Activated CD4-positive, alpha-beta memory T cell treated with anti-CD3 and anti-CD28 coated beads for 36 hours (primary cell): ENCODE measurements at regions of chr18 and their contacts with region 1.

Region 1: DNA sequence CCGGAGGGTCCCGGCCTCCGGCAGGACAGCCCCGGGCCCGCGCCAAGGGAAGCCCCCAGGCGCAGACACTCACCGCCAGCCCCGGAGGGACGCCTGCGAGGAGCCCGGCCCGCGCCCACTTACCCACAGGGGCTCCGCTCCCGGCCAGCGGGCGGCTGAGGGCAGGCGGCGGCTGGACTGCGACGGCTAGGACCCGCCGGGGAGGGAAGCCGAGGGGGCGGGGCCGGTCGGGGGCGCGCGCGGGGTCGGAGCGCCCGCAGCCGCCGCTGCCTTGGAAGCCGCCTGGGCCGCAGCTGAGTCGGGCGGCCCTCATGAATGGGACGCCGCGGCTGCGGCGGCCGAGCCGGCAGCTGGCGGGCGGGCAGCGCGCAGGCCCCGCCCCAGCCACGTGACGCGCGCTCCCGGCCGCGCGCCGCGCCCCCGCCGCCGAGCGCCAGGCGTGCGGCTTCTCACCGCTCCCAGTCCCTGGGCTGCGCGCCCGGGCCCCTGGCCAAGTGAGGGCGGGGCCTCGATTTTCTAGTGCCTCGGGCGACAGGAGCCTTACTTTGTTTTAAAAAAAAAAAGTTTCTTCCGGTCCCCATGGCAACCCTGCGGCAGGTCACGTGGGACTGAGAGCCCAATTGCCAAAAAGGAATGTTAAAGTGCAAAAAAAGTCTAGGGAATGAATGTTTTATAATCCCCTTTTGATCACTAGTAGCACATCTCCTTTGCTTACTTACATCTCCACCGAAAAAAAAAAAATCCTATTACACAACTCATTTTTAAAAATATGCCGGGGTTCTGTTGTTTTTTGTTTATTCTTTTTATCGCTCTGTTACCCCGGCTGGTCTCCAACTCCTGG is at the start of gene LPIN2:
- DNase-seq: peak; percentile 98
- H3K4me3 Mint-ChIP-seq: peak within 1 kb of the TSS; percentile 98
- H3K27ac Mint-ChIP-seq: peak within 1 kb of the TSS; percentile 96
- H3K4me1 Mint-ChIP-seq: peaks cover 63% of the 10 kb centered on the region
- H3K27me3 Mint-ChIP-seq: no peaks in the 10 kb centered on the region
- total RNA-seq, gene LPIN2: 102 to 107 TPM

Region 2: DNA sequence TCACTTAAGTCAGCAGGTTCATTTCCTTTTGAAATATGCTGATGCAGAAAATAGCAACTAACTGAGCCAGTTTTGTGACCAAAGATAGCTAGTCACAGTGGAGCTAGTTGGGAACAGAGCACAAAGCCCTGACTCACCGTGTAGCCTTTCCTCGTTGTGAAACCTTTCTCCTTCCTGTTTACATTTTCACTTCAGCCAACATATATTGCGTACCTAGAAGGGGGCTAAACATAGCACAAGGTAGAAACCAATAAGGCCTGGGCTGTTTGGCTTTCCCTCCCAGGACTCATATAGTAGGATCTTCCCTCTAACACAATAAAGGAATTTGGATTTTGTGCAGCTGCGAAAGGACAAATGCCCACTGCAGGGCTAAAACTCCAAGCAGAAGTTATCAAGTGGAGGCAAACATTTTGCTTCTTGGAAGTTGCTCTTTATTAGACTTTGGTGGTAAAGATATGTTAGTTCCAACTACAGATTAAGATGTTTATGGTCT is 24.3 kb after region 1 on chr18:
- CTCF ChIA-PET with region 1: no interaction called
- POLR2A ChIA-PET with region 1: no interaction called
- intact Hi-C with region 1: loop called (anchors 1 kb)
- DNase-seq: peak; percentile 45
- H3K4me3 Mint-ChIP-seq: no peak overlapping the region
- H3K27ac Mint-ChIP-seq: no peak overlapping the region
- H3K4me1 Mint-ChIP-seq: peaks cover 19% of the 10 kb centered on the region
- H3K27me3 Mint-ChIP-seq: no peaks in the 10 kb centered on the region

Region 3: DNA sequence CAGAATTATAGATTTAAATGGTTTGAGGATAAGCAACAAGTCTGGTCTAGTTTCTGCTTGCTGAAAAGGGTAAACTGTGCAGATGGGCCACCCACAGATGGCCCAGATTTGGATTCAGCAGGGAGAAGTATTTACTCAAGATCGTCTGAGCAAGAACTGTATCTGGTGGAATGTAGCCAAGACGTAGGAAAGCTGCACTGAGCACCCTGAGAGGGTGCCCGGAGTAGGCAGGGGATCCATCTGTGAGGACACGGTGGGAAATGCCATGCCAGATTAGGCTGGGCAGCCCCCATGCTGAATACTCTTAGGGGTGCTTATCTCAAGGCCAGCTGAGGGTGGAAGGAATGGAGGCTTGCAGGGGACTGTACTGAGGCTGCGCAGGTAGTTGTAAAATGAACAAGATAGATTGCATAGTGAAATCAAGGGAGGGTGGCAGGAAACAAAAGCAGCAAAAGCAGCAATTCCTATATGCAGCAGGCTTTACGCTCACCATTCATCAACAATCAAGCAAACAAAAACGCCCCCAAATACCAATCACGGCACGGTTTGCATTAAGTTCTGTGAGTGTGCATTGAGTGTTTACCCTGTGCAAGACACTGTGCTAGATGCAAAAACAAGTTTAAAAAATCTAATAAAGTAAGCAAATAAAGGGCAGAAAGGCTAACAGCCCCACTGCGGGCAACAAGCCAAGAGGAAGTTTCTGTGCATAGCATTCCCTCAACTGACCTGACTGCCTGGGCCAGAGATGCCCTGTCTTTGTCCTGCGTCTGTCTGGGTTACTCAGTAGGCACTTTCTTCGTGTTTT is 31.9 kb after region 1 on chr18:
- CTCF ChIA-PET with region 1: no interaction called
- POLR2A ChIA-PET with region 1: interaction called, 3 read pairs
- intact Hi-C with region 1: loop called (anchors 2 kb)
- DNase-seq: no peak
- H3K4me3 Mint-ChIP-seq: no peak overlapping the region
- H3K27ac Mint-ChIP-seq: no peak overlapping the region
- H3K4me1 Mint-ChIP-seq: peaks cover 22% of the 10 kb centered on the region
- H3K27me3 Mint-ChIP-seq: no peaks in the 10 kb centered on the region

Region 4: DNA sequence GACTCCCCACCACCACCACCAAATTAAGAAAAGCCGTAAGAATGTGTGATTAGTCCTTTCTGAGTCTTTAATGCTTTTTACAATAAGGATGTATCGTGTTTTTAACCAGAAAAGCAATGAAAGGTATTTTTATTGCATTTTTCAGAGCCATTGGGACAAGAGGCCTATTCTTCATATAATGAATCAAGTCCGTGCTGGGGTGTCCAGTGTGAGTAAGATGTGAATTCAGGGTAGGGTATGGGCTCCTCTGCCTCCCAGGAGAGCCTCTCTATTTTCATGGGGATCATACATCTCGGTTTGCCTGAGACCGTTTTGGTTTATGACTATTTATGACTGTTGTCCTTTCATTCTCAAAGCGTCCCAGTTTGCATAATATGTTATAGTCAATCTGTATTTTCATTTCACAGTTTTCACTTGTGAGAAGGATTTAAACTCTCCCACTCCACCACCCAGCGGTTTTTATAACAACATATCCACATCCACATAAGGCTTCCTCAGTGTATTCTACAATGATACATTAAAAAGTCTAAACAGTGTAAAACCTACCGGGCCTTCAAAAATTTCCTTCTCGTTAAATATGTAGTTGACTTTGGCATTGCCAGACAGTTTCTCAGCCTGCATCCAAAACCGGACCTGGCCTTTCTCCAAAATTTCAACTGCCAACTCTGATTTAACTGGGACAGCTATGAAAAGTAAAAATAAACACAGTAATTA is 80.6 kb after region 1 on chr18:
- CTCF ChIA-PET with region 1: no interaction called
- POLR2A ChIA-PET with region 1: no interaction called
- intact Hi-C with region 1: no loop called
- DNase-seq: no peak
- H3K4me3 Mint-ChIP-seq: no peak overlapping the region
- H3K27ac Mint-ChIP-seq: no peak overlapping the region
- H3K4me1 Mint-ChIP-seq: peaks cover 13% of the 10 kb centered on the region
- H3K27me3 Mint-ChIP-seq: no peaks in the 10 kb centered on the region